Activated T-helper 2 cell treated with anti-CD3 and anti-CD28 coated beads, Interferon-gamma antibody, Interleukin-2, Interleukin-4, amounts not matched to agents 10 μg/mL and 5 μg/mL and 100 μg/mL, durations not matched to agents 14 hours and 24 hours and 36 hours (primary cell): ENCODE measurements at regions of chr4 and their contacts with region 1.

Region 1: DNA sequence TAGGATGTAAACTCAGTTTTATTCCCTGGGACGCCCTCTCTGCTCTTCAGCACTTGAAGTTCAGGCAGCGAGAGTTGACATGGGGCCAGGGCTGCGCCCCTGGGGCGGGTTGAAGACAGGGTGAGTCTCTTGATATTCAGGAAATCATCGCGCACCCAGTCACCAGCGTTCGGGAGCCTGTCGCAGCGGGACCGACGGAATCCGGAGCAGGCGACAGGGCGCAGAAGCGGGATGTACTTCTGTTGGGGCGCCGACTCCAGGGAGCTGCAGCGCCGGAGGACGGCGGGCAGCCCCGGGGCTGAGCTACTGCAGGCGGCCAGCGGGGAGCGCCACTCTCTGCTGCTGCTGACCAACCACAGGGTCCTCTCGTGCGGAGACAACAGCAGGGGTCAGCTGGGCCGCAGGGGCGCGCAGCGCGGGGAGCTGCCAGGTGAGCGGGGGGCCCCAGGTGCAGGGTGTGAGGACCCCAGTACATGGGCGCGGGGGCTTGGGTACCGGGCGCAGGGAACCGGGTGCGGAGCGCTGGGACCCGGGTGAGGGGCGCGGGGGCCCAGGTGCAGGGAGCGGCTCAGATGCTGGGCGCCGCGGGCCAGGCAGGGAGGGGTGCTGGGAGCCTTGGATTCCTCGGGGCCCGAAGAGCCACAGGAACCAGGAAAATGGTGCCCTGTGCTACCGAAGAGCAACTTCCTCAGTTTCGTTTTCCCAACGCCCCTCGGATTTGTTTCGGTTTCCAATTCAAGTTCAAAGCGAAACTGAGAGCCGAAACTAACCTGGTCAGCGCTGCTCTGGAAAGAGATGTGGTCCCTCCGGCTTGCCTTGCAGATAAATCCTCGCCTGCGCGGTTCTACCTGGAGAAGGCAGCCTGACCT is at the start of gene HERC6:
- DNase-seq: peak; percentile 83
- H3K4me3 Mint-ChIP-seq: peak within 1 kb of the TSS; percentile 83
- H3K27ac Mint-ChIP-seq: peak within 1 kb of the TSS; percentile 71
- H3K4me1 Mint-ChIP-seq: peaks cover 32% of the 10 kb centered on the region
- H3K27me3 Mint-ChIP-seq: no peaks in the 10 kb centered on the region
- total RNA-seq, gene HERC6: 3.3 and 3.7 TPM in 2 replicates

Region 2: GRCh38 chr4:88007304-88008121 is 371.4 kb before region 1 on chr4 and contains the start of gene PKD2:
- intact Hi-C with region 1: loop called (anchors 10 kb)
- DNase-seq: peak; percentile 80
- H3K4me3 Mint-ChIP-seq: peak within 1 kb of the TSS; percentile 91
- H3K27ac Mint-ChIP-seq: peak within 1 kb of the TSS; percentile 85
- H3K4me1 Mint-ChIP-seq: peaks cover 30% of the 10 kb centered on the region
- H3K27me3 Mint-ChIP-seq: peaks cover 15% of the 10 kb centered on the region
- total RNA-seq, gene PKD2: 13.6 and 16.6 TPM in 2 replicates

Region 3: GRCh38 chr4:88027611-88028608 is 351.0 kb before region 1 on chr4:
- intact Hi-C with region 1: loop called (anchors 5 kb)
- DNase-seq: no peak
- H3K4me3 Mint-ChIP-seq: no peak overlapping the region
- H3K27ac Mint-ChIP-seq: peak overlapping the region; percentile 76
- H3K4me1 Mint-ChIP-seq: peaks cover 29% of the 10 kb centered on the region
- H3K27me3 Mint-ChIP-seq: no peaks in the 10 kb centered on the region

Region 4: DNA sequence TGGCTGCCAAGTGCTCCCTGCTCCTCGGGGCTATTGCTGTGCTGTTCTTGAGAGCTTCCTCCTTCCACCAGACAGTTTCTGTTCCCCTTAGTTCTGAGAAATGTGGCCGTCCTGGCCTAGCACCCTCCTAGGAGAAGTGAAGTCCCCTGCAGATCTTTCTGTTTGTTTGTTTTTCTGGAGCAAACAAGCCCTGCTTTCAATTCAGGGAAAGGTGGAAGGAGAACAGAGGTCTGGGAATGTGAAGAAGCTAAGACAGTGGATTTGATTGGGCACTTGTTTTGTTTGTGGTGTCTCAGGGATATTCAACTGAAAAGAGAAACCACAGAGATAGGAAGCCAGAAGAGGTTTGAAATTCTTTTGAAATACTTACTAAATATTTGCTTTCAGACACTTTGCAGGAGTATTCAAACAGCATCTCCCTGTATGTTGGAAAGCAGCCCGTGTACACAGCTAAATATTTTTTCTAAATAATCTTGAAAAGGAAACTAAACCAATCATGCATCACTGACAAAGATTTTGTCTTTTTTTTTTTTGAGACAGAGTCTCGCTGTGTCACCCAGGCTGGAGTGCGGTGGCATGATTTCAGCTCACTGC is 58.0 kb before region 1 on chr4:
- intact Hi-C with region 1: loop called (anchors 1 kb)
- DNase-seq: peak; percentile 35
- H3K4me3 Mint-ChIP-seq: peak overlapping the region; percentile 75
- H3K27ac Mint-ChIP-seq: peak overlapping the region; percentile 85
- H3K4me1 Mint-ChIP-seq: peaks cover 26% of the 10 kb centered on the region
- H3K27me3 Mint-ChIP-seq: no peaks in the 10 kb centered on the region

Region 5: GRCh38 chr4:88456757-88457306 is 77.9 kb after region 1 on chr4 and contains the start of gene HERC5:
- intact Hi-C with region 1: loop called (anchors 1 kb)
- DNase-seq: peak; percentile 91
- H3K4me3 Mint-ChIP-seq: peak within 1 kb of the TSS; percentile 99
- H3K27ac Mint-ChIP-seq: peak within 1 kb of the TSS; percentile 100
- H3K4me1 Mint-ChIP-seq: peaks cover 26% of the 10 kb centered on the region
- H3K27me3 Mint-ChIP-seq: peaks cover 5% of the 10 kb centered on the region
- total RNA-seq, gene HERC5: 8.4 and 10.2 TPM in 2 replicates

Region 6: DNA sequence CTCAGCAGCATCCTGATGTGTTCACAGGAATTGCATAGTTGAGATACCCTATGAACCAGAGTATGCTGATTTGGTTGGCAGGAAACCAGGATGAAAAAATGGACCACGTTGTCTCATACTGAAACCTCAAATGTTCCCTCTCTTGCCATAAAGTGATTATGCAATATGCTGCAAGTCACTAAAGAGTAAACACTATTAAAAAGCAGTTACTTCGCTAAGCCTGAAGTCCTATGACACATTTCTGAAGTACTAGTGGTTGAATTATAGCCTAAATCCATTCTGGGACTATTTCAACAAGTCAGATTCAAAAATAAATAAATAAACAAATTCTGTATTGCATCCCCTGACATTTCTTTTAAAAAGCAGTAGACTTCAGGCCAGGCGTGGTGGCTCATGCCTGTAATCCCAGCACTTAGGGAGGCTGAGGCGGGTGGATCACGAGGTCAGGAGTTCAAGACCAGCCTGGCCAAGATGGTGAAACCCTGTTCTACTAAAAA is 424.7 kb after region 1 on chr4:
- intact Hi-C with region 1: loop called (anchors 10 kb)
- DNase-seq: no peak
- H3K4me3 Mint-ChIP-seq: no peak overlapping the region
- H3K27ac Mint-ChIP-seq: no peak overlapping the region
- H3K4me1 Mint-ChIP-seq: peaks cover 10% of the 10 kb centered on the region
- H3K27me3 Mint-ChIP-seq: peaks cover 38% of the 10 kb centered on the region